ENCODE measurements at regions of chr15 and their contacts with region 1.

Region 1: GRCh38 chr15:60507596-60508424 is 28.9 kb upstream of the ICE2 start:
- DNase-seq: peak in 2 of 5 donors; percentile 32 to 41
- ATAC-seq: peak; percentile 61 to 75 (median 74)
- H3K4me3 ChIP-seq: no peak overlapping the region
- H3K27ac ChIP-seq: no peak overlapping the region
- H3K4me1 ChIP-seq: peaks cover 0 to 35% (median 22%) of the 10 kb centered on the region in 12 donors
- H3K27me3 ChIP-seq: no peaks in the 10 kb centered on the region
- CTCF ChIP-seq: peak; percentile 89 to 96 (median 93)
- POLR2A ChIP-seq: no peak

Region 2: GRCh38 chr15:60362321-60363086 is 145.3 kb before region 1 on chr15:
- intact Hi-C with region 1: loop called in 1 of 10 experiments (anchors 10 kb)
- DNase-seq: peak in 1 of 5 donors; percentile 42
- ATAC-seq: peak in 3 of 4 donors; percentile 71 to 72 (median 71)
- H3K4me3 ChIP-seq: no peak overlapping the region
- H3K27ac ChIP-seq: peak overlapping the region in 10 of 12 donors; percentile 33 to 80 (median 50)
- H3K4me1 ChIP-seq: peaks cover 6 to 63% (median 32%) of the 10 kb centered on the region in 12 donors
- H3K27me3 ChIP-seq: no peaks in the 10 kb centered on the region
- CTCF ChIP-seq: no peak
- POLR2A ChIP-seq: no peak

Region 3: DNA sequence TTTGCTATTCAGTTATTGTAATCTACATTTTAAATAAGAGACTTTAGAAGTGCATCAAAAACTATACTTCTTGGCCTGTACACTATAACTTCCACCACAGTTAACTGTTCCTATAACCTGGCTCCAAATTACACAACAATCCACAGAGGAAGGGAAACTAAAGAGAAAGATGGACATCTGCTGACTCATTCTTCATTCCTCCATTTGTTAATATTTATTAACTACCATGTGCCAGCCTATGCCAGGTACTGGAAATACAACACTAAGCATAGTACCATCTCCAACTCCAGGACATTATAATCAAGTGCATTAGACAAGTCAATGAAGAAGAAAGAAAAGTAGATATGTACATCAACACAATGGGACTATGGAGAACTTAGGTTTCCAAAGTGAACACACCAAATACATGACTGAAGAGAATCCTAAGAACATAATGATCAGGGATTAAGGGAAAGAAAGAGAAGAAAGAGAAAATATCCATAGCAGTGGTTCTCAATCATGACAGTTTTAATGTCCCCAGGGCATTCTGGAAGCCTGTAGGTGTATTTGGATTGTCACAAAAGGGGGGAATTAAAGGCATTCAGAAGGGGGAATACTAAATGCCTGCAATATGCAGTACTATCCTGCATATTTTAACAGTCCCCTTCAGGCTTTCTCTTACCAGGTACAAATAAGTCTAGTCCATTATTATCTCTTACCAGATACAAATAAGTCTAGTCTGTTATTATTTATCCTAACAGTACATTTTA is 37.7 kb before region 1 on chr15:
- intact Hi-C with region 1: no loop called
- DNase-seq: no peak
- ATAC-seq: no peak
- H3K4me3 ChIP-seq: no peak overlapping the region
- H3K27ac ChIP-seq: no peak overlapping the region
- H3K4me1 ChIP-seq: peaks cover 0 to 10% (median 0%) of the 10 kb centered on the region in 12 donors
- H3K27me3 ChIP-seq: no peaks in the 10 kb centered on the region
- CTCF ChIP-seq: no peak
- POLR2A ChIP-seq: no peak

Region 4: GRCh38 chr15:60573936-60574335 is 66.1 kb after region 1 on chr15:
- intact Hi-C with region 1: loop called in 1 of 10 experiments (anchors 10 kb)
- DNase-seq: no peak
- ATAC-seq: no peak
- H3K4me3 ChIP-seq: no peak overlapping the region
- H3K27ac ChIP-seq: peak overlapping the region in 1 of 12 donors; percentile 22
- H3K4me1 ChIP-seq: peaks cover 0 to 63% (median 15%) of the 10 kb centered on the region in 12 donors
- H3K27me3 ChIP-seq: no peaks in the 10 kb centered on the region
- CTCF ChIP-seq: no peak
- POLR2A ChIP-seq: no peak

Region 5: DNA sequence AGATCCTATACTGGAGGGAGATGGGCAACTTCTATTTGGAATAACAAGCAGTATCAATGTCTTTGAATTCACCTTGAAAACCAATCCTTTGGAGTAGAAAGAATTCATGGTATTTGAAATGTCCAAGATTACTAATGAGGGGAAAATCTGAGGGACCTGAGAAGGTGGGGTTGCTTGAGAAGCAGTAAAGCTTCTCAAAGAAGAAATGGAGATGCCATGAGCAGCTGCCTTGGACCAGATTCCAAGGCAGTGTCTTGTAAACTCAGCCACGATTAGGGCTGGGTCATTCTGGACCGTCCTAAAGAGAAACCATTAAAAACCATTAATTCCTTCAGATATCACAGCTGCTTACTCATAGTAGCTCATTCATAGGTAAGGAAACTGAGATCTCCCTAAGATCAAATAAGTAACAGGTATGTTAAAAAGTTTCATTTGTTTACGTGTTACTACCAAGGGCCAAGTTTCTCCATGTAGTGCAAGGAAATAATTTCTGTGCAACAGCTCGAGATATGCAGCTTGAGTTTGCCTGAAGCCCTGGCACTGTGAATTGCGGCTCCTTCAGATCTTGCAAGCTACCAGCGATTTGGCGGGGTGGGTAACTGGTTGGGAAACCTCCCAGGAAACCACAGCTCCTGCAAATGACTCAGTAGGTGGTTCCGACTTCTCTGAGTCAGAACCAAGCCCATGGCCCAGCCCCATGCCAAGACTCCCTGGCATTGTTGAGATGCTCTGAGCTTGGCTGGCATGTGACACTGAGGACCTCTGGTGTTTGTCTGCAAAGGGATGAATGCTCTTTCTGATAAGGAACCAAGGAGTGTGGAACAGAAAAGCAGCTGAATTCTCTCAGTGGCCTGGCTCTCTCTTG is 424.5 kb after region 1 on chr15:
- intact Hi-C with region 1: loop called in 1 of 10 experiments (anchors 10 kb)
- DNase-seq: no peak
- ATAC-seq: peak in 1 of 4 donors; percentile 33
- H3K4me3 ChIP-seq: no peak overlapping the region
- H3K27ac ChIP-seq: no peak overlapping the region
- H3K4me1 ChIP-seq: peaks cover 0 to 31% (median 6%) of the 10 kb centered on the region in 12 donors
- H3K27me3 ChIP-seq: no peaks in the 10 kb centered on the region
- CTCF ChIP-seq: no peak
- POLR2A ChIP-seq: no peak

Region 6: DNA sequence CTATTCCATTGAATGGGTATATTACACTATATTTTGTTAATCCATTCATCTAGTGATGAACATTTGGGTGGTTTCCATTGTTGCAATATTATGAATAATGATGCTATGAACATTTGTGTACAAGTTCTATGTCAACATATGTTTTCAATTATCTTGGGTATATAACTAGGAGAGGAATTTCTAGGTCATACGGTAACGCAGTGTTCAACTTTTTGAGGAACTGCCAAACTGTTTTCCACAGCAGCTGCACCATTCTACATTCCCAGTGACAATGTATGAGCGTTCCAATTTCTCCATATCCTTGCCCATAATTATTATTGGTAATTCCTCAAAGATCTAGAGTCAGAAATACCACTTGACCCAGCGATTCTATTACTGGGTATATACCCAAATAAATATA is 745.4 kb after region 1 on chr15:
- intact Hi-C with region 1: loop called in 1 of 10 experiments (anchors 5 kb)
- DNase-seq: no peak
- ATAC-seq: no peak
- H3K4me3 ChIP-seq: no peak overlapping the region
- H3K27ac ChIP-seq: no peak overlapping the region
- H3K4me1 ChIP-seq: no peaks in the 10 kb centered on the region
- H3K27me3 ChIP-seq: peaks cover 0 to 4% (median 0%) of the 10 kb centered on the region in 9 donors
- CTCF ChIP-seq: no peak
- POLR2A ChIP-seq: no peak

Region 7: DNA sequence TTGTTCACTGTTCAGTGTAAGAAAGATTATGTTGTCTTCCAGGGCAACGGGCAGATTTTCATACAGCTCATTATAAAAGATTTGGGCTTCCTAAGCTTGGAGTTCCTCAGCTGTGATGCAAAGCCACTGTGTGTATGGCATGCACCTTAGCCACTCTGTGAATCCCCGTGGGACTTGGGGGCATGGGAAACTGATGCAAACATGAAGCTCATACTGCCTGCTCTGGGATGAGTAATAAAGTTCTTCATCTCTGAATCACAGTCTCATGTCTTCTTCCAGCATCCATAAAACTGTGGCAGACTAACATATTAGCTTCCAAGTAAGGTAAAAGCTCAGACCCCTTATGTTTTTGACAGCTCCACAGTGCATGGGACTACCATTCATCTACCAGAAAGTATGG is 875.6 kb after region 1 on chr15:
- intact Hi-C with region 1: no loop called
- DNase-seq: no peak
- ATAC-seq: no peak
- H3K4me3 ChIP-seq: no peak overlapping the region
- H3K27ac ChIP-seq: no peak overlapping the region
- H3K4me1 ChIP-seq: no peaks in the 10 kb centered on the region
- H3K27me3 ChIP-seq: peaks cover 0 to 12% (median 0%) of the 10 kb centered on the region in 9 donors
- CTCF ChIP-seq: no peak
- POLR2A ChIP-seq: no peak